HEK293T (cell line): ENCODE measurements at regions of chr2 and their contacts with region 1.

Region 1: GRCh38 chr2:222298311-222299150 is at the start of gene PAX3:
- DNase-seq: peak; percentile 86

Region 2: DNA sequence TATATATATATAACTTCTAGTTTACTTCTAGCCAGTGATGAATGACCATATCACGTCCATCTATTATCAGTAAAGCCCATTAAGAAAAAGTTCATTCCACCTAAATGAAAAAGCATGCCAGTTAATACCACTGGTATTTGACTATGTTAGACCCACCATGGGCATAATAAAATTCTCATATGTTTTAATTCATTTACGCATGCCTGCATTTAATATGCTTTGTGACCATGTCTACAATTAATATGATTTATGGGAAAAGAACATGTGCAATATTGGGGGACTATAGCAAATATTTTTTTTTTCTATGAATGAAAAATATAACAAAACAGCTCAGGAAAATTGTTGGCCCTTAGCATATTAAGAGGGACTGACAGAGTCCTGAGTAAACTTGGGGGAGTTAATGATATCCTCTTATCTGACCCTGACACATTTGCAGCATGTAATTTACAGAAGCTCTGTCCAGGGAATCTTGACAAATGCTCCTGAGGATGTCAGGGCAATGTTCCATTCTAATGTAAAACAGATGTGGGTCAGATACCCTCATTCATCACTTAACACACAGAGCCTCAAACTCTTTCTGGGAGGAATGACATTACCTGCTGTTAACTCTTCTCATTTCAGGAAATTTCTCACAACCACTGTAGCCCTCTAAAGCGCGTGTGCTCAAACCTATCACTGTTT is 90.4 kb before region 1 on chr2:
- CTCF ChIA-PET with region 1: no interaction called
- POLR2A ChIA-PET with region 1: no interaction called
- DNase-seq: no peak

Region 3: GRCh38 chr2:222318026-222318711 is 19.6 kb after region 1 on chr2:
- CTCF ChIA-PET with region 1: no interaction called
- POLR2A ChIA-PET with region 1: interaction called, 15 read pairs
- DNase-seq: peak; percentile 81